ENCODE measurements at regions of chr4 and their contacts with region 1.

Region 1: DNA sequence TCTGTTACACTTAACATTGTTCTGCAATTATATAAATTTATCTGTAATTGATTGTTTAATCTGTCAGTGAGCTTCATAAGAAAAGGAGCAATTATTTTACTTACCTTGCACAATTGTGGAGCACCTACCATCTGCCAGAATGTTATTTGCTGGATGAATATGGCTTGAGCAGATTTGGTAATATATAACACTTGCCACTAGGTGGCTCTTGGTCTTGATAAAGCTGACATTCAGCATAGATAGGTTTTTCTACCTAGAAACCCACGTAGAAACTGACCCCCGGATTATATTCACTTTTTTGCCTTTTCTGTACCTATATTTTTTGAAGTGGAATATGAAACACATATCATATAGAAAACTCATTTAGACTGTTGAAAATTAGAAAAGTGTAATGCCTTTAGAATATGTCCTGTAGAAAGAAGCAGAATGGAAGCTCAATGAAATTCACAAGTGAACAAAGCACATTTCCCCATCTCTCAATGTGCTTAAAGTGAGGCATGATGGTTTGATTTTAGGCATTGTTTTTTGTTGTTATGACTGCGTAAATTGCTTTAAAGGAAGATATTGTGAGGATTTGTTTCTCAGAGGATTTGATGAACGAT is 9.5 kb downstream of the RBPJ start:
- DNase-seq: no peak
- ATAC-seq: peak; percentile 78
- H3K4me3 Mint-ChIP-seq: no peak overlapping the region
- H3K27ac Mint-ChIP-seq: no peak overlapping the region
- H3K4me1 Mint-ChIP-seq: peaks cover 42% of the 10 kb centered on the region
- H3K27me3 Mint-ChIP-seq: no peaks in the 10 kb centered on the region
- CTCF ChIP-seq: peak; percentile 81

Region 2: DNA sequence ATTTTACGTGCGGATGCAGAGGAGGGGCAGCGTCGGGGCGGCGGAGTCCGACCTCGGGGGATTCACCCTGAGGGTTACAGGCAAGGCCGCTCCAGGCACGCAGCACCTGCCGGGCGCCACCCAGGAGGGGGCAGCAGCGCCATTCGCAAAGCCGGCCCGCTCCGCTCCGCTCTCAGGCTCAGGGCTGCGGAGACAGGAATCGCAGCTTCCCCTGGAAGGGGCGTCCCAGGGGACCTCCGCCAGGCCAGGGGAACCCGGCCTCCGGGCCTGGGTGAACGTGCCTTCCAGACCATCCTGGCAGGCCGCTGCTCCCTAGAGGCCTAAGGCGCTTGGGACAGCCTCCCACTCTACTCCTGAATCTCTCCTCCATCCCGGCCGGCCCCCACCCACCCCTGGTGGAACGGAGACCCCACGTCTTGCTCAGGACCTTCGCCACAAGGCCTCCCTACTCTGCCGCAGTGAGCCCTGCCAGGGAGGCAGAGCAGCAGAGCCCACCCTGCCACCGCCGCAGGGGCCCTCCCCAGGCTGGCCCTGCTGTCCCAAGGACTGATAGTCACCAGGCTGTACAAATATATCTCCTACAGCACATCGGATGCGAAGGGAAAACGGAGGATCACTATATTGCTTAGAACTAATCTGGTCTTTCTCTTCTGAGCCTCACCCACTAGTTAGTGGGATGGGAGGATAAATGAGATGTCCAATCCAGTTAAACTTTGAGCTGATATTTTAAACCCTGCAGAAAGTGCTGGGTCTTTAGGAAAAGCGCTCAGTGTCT is 301.3 kb before region 1 on chr4:
- CTCF ChIA-PET with region 1: interaction called, 20 read pairs
- POLR2A ChIA-PET with region 1: no interaction called
- intact Hi-C with region 1: no loop called
- DNase-seq: peak; percentile 74
- ATAC-seq: peak; percentile 99
- H3K4me3 Mint-ChIP-seq: no peak overlapping the region
- H3K27ac Mint-ChIP-seq: no peak overlapping the region
- H3K4me1 Mint-ChIP-seq: peaks cover 9% of the 10 kb centered on the region
- H3K27me3 Mint-ChIP-seq: peaks cover 18% of the 10 kb centered on the region
- CTCF ChIP-seq: peak; percentile 80

Region 3: GRCh38 chr4:26081795-26082498 is 248.3 kb before region 1 on chr4:
- CTCF ChIA-PET with region 1: interaction called, 12 read pairs
- POLR2A ChIA-PET with region 1: no interaction called
- intact Hi-C with region 1: no loop called
- DNase-seq: no peak
- ATAC-seq: peak; percentile 44
- H3K4me3 Mint-ChIP-seq: no peak overlapping the region
- H3K27ac Mint-ChIP-seq: peak overlapping the region; percentile 78
- H3K4me1 Mint-ChIP-seq: peaks cover 66% of the 10 kb centered on the region
- H3K27me3 Mint-ChIP-seq: peaks cover 28% of the 10 kb centered on the region
- CTCF ChIP-seq: peak; percentile 64

Region 4: DNA sequence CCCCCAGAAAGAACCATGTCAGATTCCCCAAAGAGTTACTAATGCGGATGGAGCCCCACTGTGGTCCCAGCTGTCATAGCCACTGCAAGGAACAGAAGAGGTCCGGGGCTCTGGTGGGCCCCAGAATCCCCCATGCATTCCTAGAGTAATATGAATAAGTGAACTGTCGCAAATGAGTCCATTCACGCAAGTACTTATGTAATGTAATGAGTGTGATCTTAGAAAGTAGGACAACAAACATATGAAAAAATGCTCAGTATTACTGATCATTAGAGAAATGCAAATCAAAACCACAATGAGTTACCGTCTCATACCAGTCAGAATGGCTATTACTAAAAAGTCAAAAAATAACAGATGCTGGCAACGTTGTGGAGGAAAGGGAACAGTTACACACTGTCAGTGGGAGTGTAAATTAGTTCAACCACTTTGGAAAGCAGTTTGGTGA is 150.9 kb before region 1 on chr4:
- CTCF ChIA-PET with region 1: no interaction called
- POLR2A ChIA-PET with region 1: no interaction called
- intact Hi-C with region 1: no loop called
- DNase-seq: peak; percentile 30
- ATAC-seq: peak; percentile 34
- H3K4me3 Mint-ChIP-seq: no peak overlapping the region
- H3K27ac Mint-ChIP-seq: peak overlapping the region; percentile 36
- H3K4me1 Mint-ChIP-seq: peaks cover 13% of the 10 kb centered on the region
- H3K27me3 Mint-ChIP-seq: no peaks in the 10 kb centered on the region
- CTCF ChIP-seq: no peak

Region 5: DNA sequence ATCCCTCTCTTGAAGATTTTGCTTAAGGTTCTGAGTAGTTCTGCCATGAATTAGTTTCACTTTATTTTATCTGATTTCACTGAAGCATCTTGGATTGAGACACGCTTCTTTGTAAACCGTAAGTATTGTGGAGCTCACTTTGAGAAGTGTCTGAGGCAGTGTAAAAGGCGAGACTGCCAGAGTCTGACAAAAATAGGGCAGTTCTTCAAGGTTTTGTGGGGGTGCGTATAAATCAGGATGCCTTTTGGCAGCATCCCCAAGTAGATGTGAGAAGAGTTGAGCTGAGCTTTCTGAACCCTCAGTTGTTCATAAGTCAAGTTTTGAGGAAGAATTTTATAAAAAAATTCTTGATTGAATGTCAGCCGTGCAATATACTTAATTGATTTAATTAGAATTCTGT is 66.8 kb after region 1 on chr4:
- CTCF ChIA-PET with region 1: interaction called, 10 read pairs
- POLR2A ChIA-PET with region 1: no interaction called
- intact Hi-C with region 1: no loop called
- DNase-seq: no peak
- ATAC-seq: no peak
- H3K4me3 Mint-ChIP-seq: no peak overlapping the region
- H3K27ac Mint-ChIP-seq: no peak overlapping the region
- H3K4me1 Mint-ChIP-seq: peaks cover 9% of the 10 kb centered on the region
- H3K27me3 Mint-ChIP-seq: no peaks in the 10 kb centered on the region
- CTCF ChIP-seq: no peak

Region 6: GRCh38 chr4:26418107-26418506 is 87.8 kb after region 1 on chr4:
- CTCF ChIA-PET with region 1: interaction called, 21 read pairs
- POLR2A ChIA-PET with region 1: no interaction called
- intact Hi-C with region 1: no loop called
- DNase-seq: no peak
- ATAC-seq: no peak
- H3K4me3 Mint-ChIP-seq: no peak overlapping the region
- H3K27ac Mint-ChIP-seq: no peak overlapping the region
- H3K4me1 Mint-ChIP-seq: no peaks in the 10 kb centered on the region
- H3K27me3 Mint-ChIP-seq: no peaks in the 10 kb centered on the region
- CTCF ChIP-seq: no peak

Measured in activated CD8-positive, alpha-beta T cell treated with anti-CD3 and anti-CD28 coated beads for 36 hours (primary cell).